Activated naive CD4-positive, alpha-beta T cell treated with anti-CD3 and anti-CD28 coated beads for 36 hours (primary cell): ENCODE measurements at regions of chr16 and their contacts with region 1.

Region 1: GRCh38 chr16:29012913-29013553 is 28.2 kb downstream of the LAT start:
- DNase-seq: peak; percentile 62
- H3K4me3 Mint-ChIP-seq: peak overlapping the region; percentile 1
- H3K27ac Mint-ChIP-seq: peak overlapping the region; percentile 94
- H3K4me1 Mint-ChIP-seq: peaks cover 54% of the 10 kb centered on the region
- H3K27me3 Mint-ChIP-seq: no peaks in the 10 kb centered on the region

Region 2: GRCh38 chr16:28879841-28880588 is 133.0 kb before region 1 on chr16:
- CTCF ChIA-PET with region 1: no interaction called
- intact Hi-C with region 1: no loop called
- DNase-seq: peak; percentile 95
- H3K4me3 Mint-ChIP-seq: peak overlapping the region; percentile 90
- H3K27ac Mint-ChIP-seq: peak overlapping the region; percentile 24
- H3K4me1 Mint-ChIP-seq: peaks cover 20% of the 10 kb centered on the region
- H3K27me3 Mint-ChIP-seq: peaks cover 13% of the 10 kb centered on the region

Region 3: GRCh38 chr16:28990375-28991040 is 22.5 kb before region 1 on chr16:
- CTCF ChIA-PET with region 1: interaction called, 5 read pairs
- intact Hi-C with region 1: loop called (anchors 1 kb)
- DNase-seq: peak; percentile 90
- H3K4me3 Mint-ChIP-seq: peak overlapping the region; percentile 11
- H3K27ac Mint-ChIP-seq: peak overlapping the region; percentile 99
- H3K4me1 Mint-ChIP-seq: peaks cover 65% of the 10 kb centered on the region
- H3K27me3 Mint-ChIP-seq: no peaks in the 10 kb centered on the region

Region 4: DNA sequence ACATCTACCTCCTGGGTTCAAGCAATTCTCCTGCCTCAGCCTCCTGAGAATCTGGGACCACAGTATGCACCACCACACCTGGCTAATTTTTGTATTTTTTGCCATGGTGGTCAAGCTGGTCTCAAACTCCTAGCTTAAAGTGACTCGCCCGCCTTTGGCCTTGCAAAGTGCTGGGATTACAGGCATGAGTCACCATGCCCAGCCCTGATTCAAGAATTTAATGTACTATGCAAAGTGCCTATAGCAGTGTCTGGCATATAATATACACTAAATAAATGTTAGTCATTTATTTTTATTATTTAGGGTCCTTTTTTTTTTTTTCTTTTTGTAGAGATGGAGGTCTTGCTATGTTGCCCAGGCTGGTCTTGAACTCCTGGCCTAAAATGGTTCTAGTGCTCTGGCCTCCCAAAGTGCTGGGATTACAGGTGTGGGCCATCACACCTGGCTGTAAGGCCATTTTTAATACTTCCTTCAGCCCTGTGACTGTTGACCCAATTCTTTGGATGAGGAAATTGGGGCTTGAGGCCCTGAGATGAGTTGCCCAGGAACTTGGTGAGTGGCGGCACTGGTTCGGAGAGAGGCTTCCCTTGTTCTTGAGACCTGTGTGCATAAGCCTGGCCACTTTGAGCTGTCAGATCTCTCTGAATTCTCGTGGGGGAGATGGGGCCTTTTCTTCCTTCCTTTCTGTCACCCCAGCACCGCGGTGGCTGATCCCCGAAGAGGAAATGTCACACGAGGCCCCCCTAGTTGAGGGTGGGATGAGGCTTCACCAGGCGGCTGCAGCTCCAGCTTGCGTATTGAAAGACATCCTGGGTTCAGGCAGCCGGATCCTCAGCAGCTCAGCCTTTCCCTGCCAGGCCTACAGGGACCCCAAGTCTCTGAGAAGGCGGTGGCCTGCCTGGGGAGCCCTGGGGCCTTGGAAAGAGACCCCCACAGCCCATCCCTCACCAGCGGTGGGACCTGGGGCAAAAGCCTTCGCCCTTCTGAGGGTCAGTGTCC is 10.5 kb after region 1 on chr16:
- CTCF ChIA-PET with region 1: interaction called, 14 read pairs
- intact Hi-C with region 1: loop called (anchors 1 kb)
- DNase-seq: no peak
- H3K4me3 Mint-ChIP-seq: no peak overlapping the region
- H3K27ac Mint-ChIP-seq: no peak overlapping the region
- H3K4me1 Mint-ChIP-seq: peaks cover 73% of the 10 kb centered on the region
- H3K27me3 Mint-ChIP-seq: no peaks in the 10 kb centered on the region

Region 5: GRCh38 chr16:29815793-29816693 is 803.0 kb after region 1 on chr16 and contains the start of gene PAGR1:
- CTCF ChIA-PET with region 1: no interaction called
- intact Hi-C with region 1: no loop called
- DNase-seq: peak; percentile 99
- H3K4me3 Mint-ChIP-seq: peak within 1 kb of the TSS; percentile 93
- H3K27ac Mint-ChIP-seq: peak within 1 kb of the TSS; percentile 96
- H3K4me1 Mint-ChIP-seq: peaks cover 55% of the 10 kb centered on the region
- H3K27me3 Mint-ChIP-seq: no peaks in the 10 kb centered on the region
- total RNA-seq, gene PAGR1: 16.9 to 19.3 TPM